PC-9 (cell line): ENCODE measurements at regions of chr16 and their contacts with region 1.

Region 1: GRCh38 chr16:70298988-70299938 is at the start of gene DDX19B:
- DNase-seq: peak; percentile 58 to 61
- H3K4me3 ChIP-seq: peak within 1 kb of the TSS; percentile 85
- H3K27ac ChIP-seq: peak within 1 kb of the TSS; percentile 85
- H3K4me1 ChIP-seq: peaks cover 16% of the 10 kb centered on the region; the same call in 1 of the 2 replicates
- H3K27me3 ChIP-seq: no peaks in the 10 kb centered on the region
- CTCF ChIP-seq: no peak
- total RNA-seq, gene DDX19B: 40.1 and 42.1 TPM in 2 replicates

Region 2: GRCh38 chr16:70331091-70331490 is 31.8 kb after region 1 on chr16:
- CTCF ChIA-PET with region 1: no interaction called
- POLR2A ChIA-PET with region 1: no interaction called
- intact Hi-C with region 1: no loop called
- DNase-seq: no peak
- H3K4me3 ChIP-seq: no peak overlapping the region
- H3K27ac ChIP-seq: no peak overlapping the region
- H3K4me1 ChIP-seq: no peaks in the 10 kb centered on the region
- H3K27me3 ChIP-seq: no peaks in the 10 kb centered on the region
- CTCF ChIP-seq: no peak

Region 3: GRCh38 chr16:70345840-70346239 is 46.6 kb after region 1 on chr16:
- CTCF ChIA-PET with region 1: no interaction called
- POLR2A ChIA-PET with region 1: no interaction called
- intact Hi-C with region 1: loop called (anchors 2 kb)
- DNase-seq: no peak
- H3K4me3 ChIP-seq: peak overlapping the region; percentile 77
- H3K27ac ChIP-seq: peak overlapping the region; percentile 56
- H3K4me1 ChIP-seq: peaks cover 13% of the 10 kb centered on the region; the same call in 1 of the 2 replicates
- H3K27me3 ChIP-seq: no peaks in the 10 kb centered on the region
- CTCF ChIP-seq: no peak

Region 4: GRCh38 chr16:70725912-70726828 is 426.9 kb after region 1 on chr16:
- CTCF ChIA-PET with region 1: no interaction called
- POLR2A ChIA-PET with region 1: no interaction called
- intact Hi-C with region 1: no loop called
- DNase-seq: no peak
- H3K4me3 ChIP-seq: no peak overlapping the region
- H3K27ac ChIP-seq: no peak overlapping the region
- H3K4me1 ChIP-seq: no peaks in the 10 kb centered on the region
- H3K27me3 ChIP-seq: no peaks in the 10 kb centered on the region
- CTCF ChIP-seq: no peak